Transverse colon (tissue), 4 donors: ENCODE measurements at regions of chr18 and their contacts with region 1.

Region 1: GRCh38 chr18:79507076-79507545 is 111.4 kb downstream of the NFATC1 start:
- DNase-seq: peak; percentile 39
- H3K4me3 ChIP-seq: peak overlapping the region in 3 of 4 donors; percentile 1 to 35 (median 18)
- H3K27ac ChIP-seq: peak overlapping the region; percentile 79 to 87 (median 84)
- H3K4me1 ChIP-seq: peaks cover 14 to 34% (median 22%) of the 10 kb centered on the region in 4 donors
- H3K27me3 ChIP-seq: peaks cover 13% of the 10 kb centered on the region
- CTCF ChIP-seq: no peak
- EP300 ChIP-seq: no peak
- POLR2A ChIP-seq: no peak

Region 2: GRCh38 chr18:78403371-78403770 is 1103.7 kb before region 1 on chr18:
- in situ Hi-C with region 1: no loop called
- intact Hi-C with region 1: no loop called
- DNase-seq: no peak
- H3K4me3 ChIP-seq: no peak overlapping the region
- H3K27ac ChIP-seq: no peak overlapping the region
- H3K4me1 ChIP-seq: no peaks in the 10 kb centered on the region
- H3K27me3 ChIP-seq: no peaks in the 10 kb centered on the region
- CTCF ChIP-seq: no peak
- EP300 ChIP-seq: no peak
- POLR2A ChIP-seq: no peak

Region 3: DNA sequence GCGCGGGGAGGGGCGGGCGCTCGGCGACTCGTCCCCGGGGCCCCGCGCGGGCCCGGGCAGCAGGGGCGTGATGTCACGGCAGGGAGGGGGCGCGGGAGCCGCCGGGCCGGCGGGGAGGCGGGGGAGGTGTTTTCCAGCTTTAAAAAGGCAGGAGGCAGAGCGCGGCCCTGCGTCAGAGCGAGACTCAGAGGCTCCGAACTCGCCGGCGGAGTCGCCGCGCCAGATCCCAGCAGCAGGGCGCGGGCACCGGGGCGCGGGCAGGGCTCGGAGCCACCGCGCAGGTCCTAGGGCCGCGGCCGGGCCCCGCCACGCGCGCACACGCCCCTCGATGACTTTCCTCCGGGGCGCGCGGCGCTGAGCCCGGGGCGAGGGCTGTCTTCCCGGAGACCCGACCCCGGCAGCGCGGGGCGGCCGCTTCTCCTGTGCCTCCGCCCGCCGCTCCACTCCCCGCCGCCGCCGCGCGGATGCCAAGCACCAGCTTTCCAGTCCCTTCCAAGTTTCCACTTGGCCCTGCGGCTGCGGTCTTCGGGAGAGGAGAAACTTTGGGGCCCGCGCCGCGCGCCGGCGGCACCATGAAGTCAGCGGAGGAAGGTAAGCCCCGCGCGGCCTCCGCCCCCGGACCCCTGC is 111.2 kb before region 1 on chr18 and contains the start of gene NFATC1:
- in situ Hi-C with region 1: loop called in 1 of 4 experiments (anchors 25 kb)
- intact Hi-C with region 1: loop called (anchors 5 kb)
- DNase-seq: peak; percentile 67
- H3K4me3 ChIP-seq: peak within 1 kb of the TSS; percentile 11 to 60 (median 46)
- H3K27ac ChIP-seq: peak within 1 kb of the TSS; percentile 87 to 95 (median 88)
- H3K4me1 ChIP-seq: peaks cover 22 to 58% (median 46%) of the 10 kb centered on the region in 4 donors
- H3K27me3 ChIP-seq: peaks cover 89% of the 10 kb centered on the region
- CTCF ChIP-seq: no peak
- EP300 ChIP-seq: no peak
- POLR2A ChIP-seq: no peak
- total RNA-seq, gene NFATC1: 5.3 to 19.1 (median 11.8) TPM